ENCODE measurements at regions of chr10 and their contacts with region 1.

Region 1: DNA sequence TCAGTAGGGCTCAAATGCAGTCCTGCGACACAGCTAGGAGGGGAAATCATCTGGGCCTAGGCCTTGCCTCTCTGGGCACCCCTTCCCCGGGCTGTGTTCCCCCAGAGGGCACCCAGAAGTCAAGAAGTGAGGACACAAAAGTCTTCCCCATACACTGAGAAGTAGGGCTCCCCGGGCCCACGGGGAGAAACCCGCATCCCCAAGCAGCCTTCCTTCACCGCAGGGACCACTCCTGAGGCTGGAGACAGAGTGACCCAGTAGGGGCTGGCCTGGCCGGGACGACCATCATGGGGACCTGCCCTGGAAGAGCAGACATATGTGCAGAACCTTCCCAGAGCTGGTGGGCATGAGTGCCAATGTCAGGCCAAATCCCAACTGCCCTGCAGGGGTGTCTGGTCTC is 163.5 kb downstream of the GFRA1 start:
- DNase-seq: no peak
- ATAC-seq: no peak
- H3K4me3 ChIP-seq: no peak overlapping the region
- H3K27ac ChIP-seq: no peak overlapping the region
- H3K4me1 ChIP-seq: no peaks in the 10 kb centered on the region
- H3K27me3 ChIP-seq: peaks cover 0 to 8% (median 0%) of the 10 kb centered on the region in 7 donors
- CTCF ChIP-seq: no peak

Region 2: GRCh38 chr10:116038259-116038658 is 71.2 kb before region 1 on chr10:
- intact Hi-C with region 1: no loop called
- DNase-seq: no peak
- ATAC-seq: peak in 4 of 8 donors; percentile 64 to 88 (median 78)
- H3K4me3 ChIP-seq: no peak overlapping the region
- H3K27ac ChIP-seq: no peak overlapping the region
- H3K4me1 ChIP-seq: no peaks in the 10 kb centered on the region
- H3K27me3 ChIP-seq: no peaks in the 10 kb centered on the region
- CTCF ChIP-seq: no peak

Region 3: GRCh38 chr10:116088985-116089384 is 20.5 kb before region 1 on chr10:
- intact Hi-C with region 1: loop called in 1 of 10 experiments (anchors 2 kb)
- DNase-seq: no peak
- ATAC-seq: no peak
- H3K4me3 ChIP-seq: no peak overlapping the region
- H3K27ac ChIP-seq: no peak overlapping the region
- H3K4me1 ChIP-seq: no peaks in the 10 kb centered on the region
- H3K27me3 ChIP-seq: peaks cover 0 to 6% (median 5%) of the 10 kb centered on the region in 7 donors
- CTCF ChIP-seq: no peak

Measured in heart right ventricle (tissue), 16 donors.